ENCODE measurements at regions of chr3 and their contacts with region 1.

Region 1: DNA sequence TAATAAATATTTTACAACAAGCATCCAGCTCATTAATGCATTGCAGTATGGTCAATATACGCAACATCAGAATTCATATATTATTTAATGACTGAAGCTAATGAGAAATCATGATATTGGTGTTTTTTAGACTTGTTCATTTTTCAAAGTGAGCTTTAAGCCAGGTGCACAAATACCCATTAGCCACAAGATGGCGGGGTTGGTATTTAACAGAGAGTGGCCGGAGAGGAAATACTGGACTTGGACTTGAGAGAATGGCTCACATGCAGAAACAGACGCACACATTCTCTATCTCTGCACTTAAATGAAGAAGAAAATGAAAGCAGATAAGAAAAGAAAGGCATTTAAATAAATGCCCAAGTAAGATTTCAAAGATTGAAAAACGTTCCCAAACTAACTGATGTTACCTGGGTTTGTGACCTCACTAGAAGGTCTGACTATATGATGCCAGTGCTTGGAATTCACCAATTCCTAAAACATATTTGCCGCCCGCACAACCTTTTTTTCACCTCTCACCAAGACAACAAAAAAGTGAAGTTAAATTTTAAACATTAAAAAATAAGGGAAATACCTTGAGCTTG is 21.2 kb upstream of the CRBN start:
- DNase-seq: peak; percentile 38
- H3K4me3 ChIP-seq: no peak overlapping the region; a peak in 1 of 4 replicates
- H3K27ac ChIP-seq: no peak overlapping the region
- H3K4me1 ChIP-seq: no peaks in the 10 kb centered on the region
- H3K27me3 ChIP-seq: no peaks in the 10 kb centered on the region
- CTCF ChIP-seq: peak; percentile 81
- EP300 ChIP-seq: no peak
- RAD21 ChIP-seq: peak; percentile 91

Region 2: DNA sequence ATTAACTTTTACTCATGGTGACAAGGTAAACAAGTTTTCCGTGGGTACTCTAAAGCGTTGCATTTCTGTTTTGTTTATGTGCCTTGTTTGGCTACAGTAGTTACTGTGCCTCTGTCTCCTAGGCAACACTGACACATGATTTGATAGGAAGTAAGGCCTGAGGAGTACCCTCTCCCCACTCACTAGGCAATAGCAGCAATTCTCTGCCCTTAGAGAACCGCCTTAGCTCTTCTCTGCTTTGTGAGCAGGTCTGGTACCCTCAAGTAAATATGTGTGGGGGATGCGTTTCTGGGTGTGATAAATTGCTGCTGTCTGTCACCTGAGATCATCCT is 90.5 kb before region 1 on chr3 and contains the start of gene IL5RA:
- CTCF ChIA-PET with region 1: no interaction called
- POLR2A ChIA-PET with region 1: no interaction called
- DNase-seq: peak; percentile 22
- H3K4me3 ChIP-seq: no peak within 1 kb of the TSS
- H3K27ac ChIP-seq: no peak within 1 kb of the TSS
- H3K4me1 ChIP-seq: no peaks in the 10 kb centered on the region
- H3K27me3 ChIP-seq: no peaks in the 10 kb centered on the region
- CTCF ChIP-seq: no peak
- EP300 ChIP-seq: no peak
- RAD21 ChIP-seq: no peak
- polyA plus RNA-seq, gene IL5RA: not detected in 2 replicates

Region 3: GRCh38 chr3:3170998-3171397 is 29.7 kb before region 1 on chr3:
- CTCF ChIA-PET with region 1: no interaction called
- POLR2A ChIA-PET with region 1: no interaction called
- DNase-seq: peak; percentile 15
- H3K4me3 ChIP-seq: no peak overlapping the region
- H3K27ac ChIP-seq: no peak overlapping the region
- H3K4me1 ChIP-seq: no peaks in the 10 kb centered on the region
- H3K27me3 ChIP-seq: no peaks in the 10 kb centered on the region
- CTCF ChIP-seq: peak; percentile 63
- EP300 ChIP-seq: no peak
- RAD21 ChIP-seq: peak; percentile 47

Region 4: GRCh38 chr3:3998140-3998922 is 797.6 kb after region 1 on chr3:
- CTCF ChIA-PET with region 1: interaction called, 55 read pairs
- POLR2A ChIA-PET with region 1: no interaction called
- DNase-seq: peak; percentile 38
- H3K4me3 ChIP-seq: no peak overlapping the region; a peak in 1 of 4 replicates
- H3K27ac ChIP-seq: no peak overlapping the region
- H3K4me1 ChIP-seq: no peaks in the 10 kb centered on the region
- H3K27me3 ChIP-seq: no peaks in the 10 kb centered on the region
- CTCF ChIP-seq: peak; percentile 46
- EP300 ChIP-seq: no peak
- RAD21 ChIP-seq: peak; percentile 78

Region 5: DNA sequence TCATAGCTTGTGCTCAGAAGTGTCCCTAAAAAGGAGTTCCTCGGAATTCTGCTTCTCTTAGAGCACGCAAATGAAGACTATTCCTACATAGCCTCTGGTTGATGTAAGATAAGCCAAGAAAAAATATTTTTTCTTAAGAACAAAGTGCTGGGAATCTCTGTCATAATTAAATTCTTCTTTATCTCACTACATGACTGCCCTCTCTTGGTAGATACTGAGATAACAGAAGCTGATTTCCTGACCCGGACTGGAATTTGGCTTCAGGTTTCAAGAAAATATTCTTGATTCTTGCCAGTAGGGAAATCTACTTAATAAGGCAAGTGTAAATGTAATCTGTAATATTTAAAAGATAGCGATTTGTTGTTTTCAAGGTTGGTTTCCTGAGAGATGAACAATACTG is 1071.1 kb after region 1 on chr3:
- CTCF ChIA-PET with region 1: interaction called, 17 read pairs
- POLR2A ChIA-PET with region 1: no interaction called
- DNase-seq: peak; percentile 20
- H3K4me3 ChIP-seq: no peak overlapping the region; a peak in 1 of 4 replicates
- H3K27ac ChIP-seq: no peak overlapping the region
- H3K4me1 ChIP-seq: no peaks in the 10 kb centered on the region; a peak in 1 of 4 replicates
- H3K27me3 ChIP-seq: no peaks in the 10 kb centered on the region
- CTCF ChIP-seq: peak; percentile 65
- EP300 ChIP-seq: no peak
- RAD21 ChIP-seq: peak; percentile 57

Region 6: GRCh38 chr3:4290272-4290893 is 1089.7 kb after region 1 on chr3:
- CTCF ChIA-PET with region 1: interaction called, 125 read pairs
- POLR2A ChIA-PET with region 1: no interaction called
- DNase-seq: peak; percentile 32
- H3K4me3 ChIP-seq: peak overlapping the region in 1 of 2 experiments; percentile 42; a peak in 1 of 4 replicates
- H3K27ac ChIP-seq: no peak overlapping the region
- H3K4me1 ChIP-seq: no peaks in the 10 kb centered on the region; a peak in 1 of 4 replicates
- H3K27me3 ChIP-seq: no peaks in the 10 kb centered on the region; the same call in 1 of the 2 replicates
- CTCF ChIP-seq: peak; percentile 91
- EP300 ChIP-seq: no peak
- RAD21 ChIP-seq: peak; percentile 86

Region 7: DNA sequence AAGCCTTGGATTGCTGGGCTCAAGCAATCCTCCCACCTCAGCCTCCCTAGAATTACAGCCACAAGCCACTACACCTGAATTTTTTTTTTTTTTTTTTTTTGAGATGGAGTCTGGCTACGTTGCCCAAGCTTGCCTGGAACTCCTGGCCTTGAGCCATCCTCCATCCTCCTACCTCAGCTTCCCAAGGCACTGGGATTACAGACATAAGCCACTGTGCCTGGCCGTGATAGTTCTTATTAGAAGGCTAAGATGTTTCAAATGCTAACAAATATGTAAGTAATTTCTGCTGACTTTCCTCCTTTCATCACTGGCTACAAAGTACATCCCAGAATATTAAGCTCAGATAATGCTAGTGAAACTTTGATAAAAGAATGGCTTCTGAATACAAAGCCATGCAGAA is 1096.8 kb after region 1 on chr3:
- CTCF ChIA-PET with region 1: interaction called, 125 read pairs
- POLR2A ChIA-PET with region 1: no interaction called
- DNase-seq: no peak
- H3K4me3 ChIP-seq: no peak overlapping the region
- H3K27ac ChIP-seq: no peak overlapping the region
- H3K4me1 ChIP-seq: no peaks in the 10 kb centered on the region
- H3K27me3 ChIP-seq: no peaks in the 10 kb centered on the region
- CTCF ChIP-seq: no peak
- EP300 ChIP-seq: no peak
- RAD21 ChIP-seq: no peak

Measured in SK-N-SH (cell line).